ENCODE measurements at regions of chr1 and their contacts with region 1.

Region 1: DNA sequence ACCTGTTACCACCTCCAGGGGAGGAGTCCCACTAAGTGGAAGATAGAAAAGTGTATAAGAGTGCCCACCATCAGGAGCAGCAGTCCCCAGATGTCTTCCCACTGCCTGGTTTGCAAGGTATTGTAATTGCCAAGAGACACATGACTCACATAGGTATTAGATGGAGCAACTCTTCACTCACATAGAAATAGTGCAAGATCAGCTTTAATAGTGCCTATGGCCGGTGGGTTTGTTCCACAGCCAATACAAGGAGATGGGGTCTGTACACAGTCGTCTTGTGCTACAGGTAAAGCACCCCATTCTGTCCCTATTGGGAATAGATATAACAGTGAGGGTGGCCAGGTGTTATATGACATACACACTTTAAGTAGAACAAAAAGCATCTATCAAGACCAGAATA is 18.6 kb upstream of the GBP5 start:
- DNase-seq: no peak
- ATAC-seq: no peak
- H3K4me3 ChIP-seq: no peak overlapping the region
- H3K27ac ChIP-seq: no peak overlapping the region
- H3K4me1 ChIP-seq: no peaks in the 10 kb centered on the region
- H3K27me3 ChIP-seq: no peaks in the 10 kb centered on the region
- CTCF ChIP-seq: no peak

Region 2: DNA sequence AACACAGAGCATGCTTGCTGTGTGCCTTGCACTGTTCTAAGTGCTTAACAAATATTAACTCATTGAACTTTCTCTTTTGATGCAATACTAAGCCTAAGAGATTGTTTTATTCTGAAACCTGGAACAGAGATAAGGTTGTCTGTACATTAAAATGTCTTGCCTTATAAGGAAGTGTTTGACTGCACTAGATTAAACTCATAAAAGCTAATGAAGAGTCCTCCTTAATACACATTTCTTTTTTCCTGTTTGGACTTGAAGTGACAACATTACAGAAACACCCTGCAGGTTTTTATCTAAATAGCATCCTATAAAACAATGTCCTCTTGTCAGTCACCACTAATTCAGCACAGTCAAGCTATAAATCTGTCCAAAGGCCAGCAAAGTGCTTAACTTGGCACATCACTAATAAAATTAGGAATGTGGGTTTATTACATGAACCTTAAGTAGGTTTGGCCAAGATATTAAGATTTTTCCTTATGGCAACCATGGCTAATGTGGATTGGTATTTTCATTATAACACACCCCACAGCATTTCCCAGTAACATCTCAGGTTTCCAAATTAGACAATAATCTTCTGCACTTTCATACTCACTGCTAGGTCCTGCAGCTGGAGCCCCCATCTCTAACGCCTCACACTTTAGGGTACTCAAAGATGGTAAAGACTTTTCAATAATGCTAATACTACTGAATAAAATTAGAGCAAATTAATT is 1572.9 kb before region 1 on chr1:
- intact Hi-C with region 1: loop called in 1 of 2 experiments (anchors 5 kb)
- DNase-seq: no peak
- ATAC-seq: no peak
- H3K4me3 ChIP-seq: no peak overlapping the region
- H3K27ac ChIP-seq: no peak overlapping the region
- H3K4me1 ChIP-seq: no peaks in the 10 kb centered on the region
- H3K27me3 ChIP-seq: no peaks in the 10 kb centered on the region
- CTCF ChIP-seq: no peak

Measured in psoas muscle (tissue), 8 donors.